ENCODE measurements at regions of chr3 and their contacts with region 1.

Region 1: DNA sequence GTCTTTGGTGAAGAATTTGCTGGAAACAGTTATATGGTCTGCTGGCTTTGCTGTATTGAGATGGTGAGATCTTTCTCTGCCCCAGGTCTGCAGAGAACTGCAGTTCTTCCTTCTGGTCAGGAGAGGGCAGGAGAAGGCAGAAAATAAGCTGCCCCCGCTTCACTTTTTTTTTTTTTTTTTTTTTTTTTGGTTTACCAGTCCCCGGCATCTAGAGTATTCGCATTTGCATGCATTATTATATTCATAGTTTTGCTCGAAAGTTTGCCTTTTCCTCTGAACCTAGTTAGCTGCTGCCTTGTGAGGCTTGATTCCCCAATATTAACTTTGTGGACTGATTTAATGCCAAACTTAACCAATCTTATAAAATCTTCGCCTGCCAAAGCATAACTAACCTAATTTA is 10.6 kb upstream of the PARL start:
- DNase-seq: no peak
- ATAC-seq: peak; percentile 85
- H3K4me3 ChIP-seq: no peak overlapping the region
- H3K27ac ChIP-seq: no peak overlapping the region
- H3K4me1 ChIP-seq: peaks cover 8% of the 10 kb centered on the region; the same call in 1 of the 2 replicates
- H3K27me3 ChIP-seq: no peaks in the 10 kb centered on the region
- CTCF ChIP-seq: peak; percentile 79 to 91 (median 89)
- EP300 ChIP-seq: no peak
- POLR2A ChIP-seq: no peak
- RAD21 ChIP-seq: peak; percentile 98

Region 2: GRCh38 chr3:183857863-183858262 is 37.4 kb before region 1 on chr3:
- CTCF ChIA-PET with region 1: no interaction called
- POLR2A ChIA-PET with region 1: no interaction called
- RAD21 ChIA-PET with region 1: no interaction called
- SMC1A ChIA-PET with region 1: no interaction called
- in situ Hi-C with region 1: no loop called
- intact Hi-C with region 1: no loop called
- DNase-seq: no peak
- ATAC-seq: no peak
- H3K4me3 ChIP-seq: no peak overlapping the region
- H3K27ac ChIP-seq: no peak overlapping the region
- H3K4me1 ChIP-seq: no peaks in the 10 kb centered on the region
- H3K27me3 ChIP-seq: no peaks in the 10 kb centered on the region
- CTCF ChIP-seq: no peak
- EP300 ChIP-seq: no peak
- POLR2A ChIP-seq: no peak
- RAD21 ChIP-seq: no peak

Region 3: GRCh38 chr3:183884427-183885296 is 10.6 kb before region 1 on chr3 and contains the start of gene PARL:
- CTCF ChIA-PET with region 1: interaction called, 26 read pairs
- POLR2A ChIA-PET with region 1: interaction called, 3 read pairs
- RAD21 ChIA-PET with region 1: interaction called, 6 read pairs
- SMC1A ChIA-PET with region 1: interaction called, 6 read pairs
- in situ Hi-C with region 1: no loop called
- intact Hi-C with region 1: no loop called
- DNase-seq: peak; percentile 70
- ATAC-seq: peak; percentile 99
- H3K4me3 ChIP-seq: peak within 1 kb of the TSS; percentile 94
- H3K27ac ChIP-seq: peak within 1 kb of the TSS; percentile 76
- H3K4me1 ChIP-seq: peaks cover 4% of the 10 kb centered on the region
- H3K27me3 ChIP-seq: no peaks in the 10 kb centered on the region
- CTCF ChIP-seq: peak; percentile 98; a peak in 5 of 6 replicates
- EP300 ChIP-seq: no peak
- POLR2A ChIP-seq: peak; percentile 98
- RAD21 ChIP-seq: peak; percentile 67
- polyA plus RNA-seq, gene PARL: 49.7 to 83.0 TPM

Region 4: DNA sequence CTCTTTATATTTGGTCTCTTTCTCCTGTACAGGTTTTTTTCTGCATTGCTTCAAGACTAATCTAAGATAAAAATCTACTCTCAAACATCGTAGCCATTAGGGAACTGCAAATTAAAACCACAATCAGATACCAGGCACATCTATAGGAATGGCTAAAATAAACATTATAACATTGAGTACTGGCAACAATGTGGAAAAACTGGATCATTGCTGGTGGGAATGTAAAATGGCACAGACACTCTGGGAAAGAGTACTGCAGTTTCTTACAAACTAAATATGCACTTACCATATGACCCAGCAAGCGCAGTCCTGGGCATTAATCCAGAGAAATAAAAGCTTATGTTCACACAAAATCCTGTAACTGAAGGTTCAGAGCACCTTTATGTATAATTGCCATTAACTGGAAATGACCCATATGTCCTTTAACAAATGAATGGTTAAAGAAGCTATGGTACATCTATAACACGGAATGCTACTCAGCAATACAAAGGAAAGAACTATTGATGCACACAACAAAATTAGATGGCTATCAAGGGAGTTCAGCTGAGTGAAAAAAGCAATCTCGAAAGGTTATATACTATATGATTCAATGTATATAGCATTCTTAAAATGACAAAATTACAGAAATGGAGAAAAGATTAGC is 116.1 kb after region 1 on chr3:
- CTCF ChIA-PET with region 1: interaction called, 84 read pairs
- POLR2A ChIA-PET with region 1: interaction called, 3 read pairs
- RAD21 ChIA-PET with region 1: interaction called, 9 read pairs
- SMC1A ChIA-PET with region 1: interaction called, 32 read pairs
- in situ Hi-C with region 1: loop called (anchors 5 kb)
- intact Hi-C with region 1: no loop called
- DNase-seq: no peak
- ATAC-seq: no peak
- H3K4me3 ChIP-seq: no peak overlapping the region
- H3K27ac ChIP-seq: no peak overlapping the region
- H3K4me1 ChIP-seq: peaks cover 6% of the 10 kb centered on the region
- H3K27me3 ChIP-seq: no peaks in the 10 kb centered on the region
- CTCF ChIP-seq: no peak
- EP300 ChIP-seq: no peak
- POLR2A ChIP-seq: no peak
- RAD21 ChIP-seq: no peak

Region 5: DNA sequence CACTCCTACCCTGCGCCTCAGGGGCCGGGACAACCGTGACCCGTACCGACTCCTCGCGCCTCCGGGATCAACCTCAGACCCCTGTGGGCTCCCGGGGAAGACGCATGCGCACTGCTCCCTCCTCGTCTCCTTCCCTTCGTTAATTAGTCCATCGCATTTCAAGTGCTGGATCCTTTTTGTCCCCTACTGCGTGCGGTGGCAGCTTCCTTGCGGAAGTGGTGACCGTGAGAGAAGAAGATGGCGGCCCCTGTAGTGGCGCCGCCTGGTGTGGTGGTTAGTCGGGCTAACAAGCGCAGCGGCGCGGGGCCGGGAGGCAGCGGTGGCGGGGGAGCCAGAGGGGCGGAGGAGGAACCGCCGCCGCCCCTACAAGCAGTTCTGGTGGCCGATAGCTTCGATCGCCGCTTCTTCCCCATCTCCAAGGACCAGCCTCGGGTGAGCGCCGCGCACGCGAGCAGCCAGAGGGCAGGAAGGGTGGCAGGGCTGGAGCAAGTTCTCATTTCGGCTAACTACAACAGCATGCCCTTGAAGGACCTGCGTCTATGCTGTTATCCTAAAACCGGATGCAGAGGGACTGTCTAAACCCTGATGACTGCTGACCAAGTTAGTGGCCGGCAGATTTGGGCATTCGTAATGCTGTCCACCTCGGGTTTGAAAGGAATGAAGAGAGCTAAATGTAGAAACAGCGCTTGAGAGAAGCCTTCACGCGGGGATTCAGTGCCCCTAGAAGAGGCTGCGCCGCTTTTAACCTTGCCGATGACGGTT is 240.0 kb after region 1 on chr3 and contains the start of gene EIF2B5:
- CTCF ChIA-PET with region 1: interaction called, 3 read pairs
- POLR2A ChIA-PET with region 1: no interaction called
- RAD21 ChIA-PET with region 1: no interaction called
- SMC1A ChIA-PET with region 1: no interaction called
- in situ Hi-C with region 1: no loop called
- intact Hi-C with region 1: loop called (anchors 10 kb)
- DNase-seq: peak; percentile 84
- ATAC-seq: peak; percentile 92
- H3K4me3 ChIP-seq: peak within 1 kb of the TSS; percentile 95
- H3K27ac ChIP-seq: peak within 1 kb of the TSS; percentile 84
- H3K4me1 ChIP-seq: peaks cover 4% of the 10 kb centered on the region; the same call in 1 of the 2 replicates
- H3K27me3 ChIP-seq: no peaks in the 10 kb centered on the region
- CTCF ChIP-seq: peak; percentile 25 to 36 (median 35); a peak in 4 of 6 replicates
- EP300 ChIP-seq: no peak
- POLR2A ChIP-seq: peak; percentile 96
- RAD21 ChIP-seq: no peak
- polyA plus RNA-seq, gene EIF2B5: 13.7 to 23.6 TPM

Region 6: GRCh38 chr3:184250167-184250828 is 355.0 kb after region 1 on chr3:
- CTCF ChIA-PET with region 1: interaction called, 18 read pairs
- POLR2A ChIA-PET with region 1: no interaction called
- RAD21 ChIA-PET with region 1: interaction called, 8 read pairs
- SMC1A ChIA-PET with region 1: interaction called, 6 read pairs
- in situ Hi-C with region 1: no loop called
- intact Hi-C with region 1: loop called (anchors 1 kb)
- DNase-seq: peak; percentile 85
- ATAC-seq: peak; percentile 88
- H3K4me3 ChIP-seq: peak overlapping the region; percentile 82
- H3K27ac ChIP-seq: peak overlapping the region; percentile 91
- H3K4me1 ChIP-seq: no peaks in the 10 kb centered on the region
- H3K27me3 ChIP-seq: no peaks in the 10 kb centered on the region
- CTCF ChIP-seq: peak; percentile 96 to 97 (median 96)
- EP300 ChIP-seq: no peak
- POLR2A ChIP-seq: no peak
- RAD21 ChIP-seq: peak; percentile 79

Region 7: DNA sequence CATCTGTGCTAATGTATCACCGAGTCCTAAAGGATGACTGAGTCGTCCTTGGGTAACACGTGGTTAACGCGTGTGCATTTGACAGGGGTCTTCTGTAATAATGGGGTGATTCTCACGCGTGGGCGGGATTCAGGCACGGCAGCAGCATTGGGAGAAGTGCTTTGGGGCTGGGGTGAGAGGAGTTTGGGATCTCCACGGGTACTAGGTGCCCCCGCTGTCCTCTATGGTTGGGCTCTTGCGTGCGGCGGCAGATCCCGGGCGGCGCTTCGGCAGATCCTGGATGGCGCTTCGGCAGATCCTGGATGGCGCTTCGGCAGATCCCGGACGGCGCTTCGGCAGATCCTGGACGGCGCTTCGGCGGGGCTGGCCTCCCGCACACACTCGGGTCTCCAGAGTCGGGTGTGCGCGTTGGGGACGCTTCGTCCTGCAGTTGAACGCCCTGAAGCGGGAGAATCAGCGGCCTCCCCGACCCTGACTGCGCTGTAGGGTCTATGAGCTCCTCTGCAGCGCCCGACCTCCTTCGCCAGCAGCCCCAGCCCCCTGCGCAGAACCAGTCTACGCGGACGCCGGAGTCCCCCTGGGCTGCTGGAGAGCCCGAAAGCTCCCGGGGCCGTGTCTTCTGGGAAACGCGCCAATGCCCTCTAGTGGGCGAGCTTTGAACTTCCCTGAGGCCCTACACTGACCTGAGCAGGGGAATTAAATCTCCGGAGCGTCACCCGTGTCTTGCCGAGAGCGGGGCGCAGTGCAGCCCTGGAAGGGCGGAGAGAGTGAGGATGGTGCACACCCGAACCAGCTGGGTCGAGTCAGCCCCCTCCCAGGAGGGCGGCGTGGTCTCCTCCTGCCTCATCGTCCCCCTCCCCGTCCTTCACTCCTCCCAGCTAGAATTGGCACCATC is 618.2 kb after region 1 on chr3:
- CTCF ChIA-PET with region 1: interaction called, 4 read pairs
- POLR2A ChIA-PET with region 1: no interaction called
- RAD21 ChIA-PET with region 1: no interaction called
- SMC1A ChIA-PET with region 1: no interaction called
- in situ Hi-C with region 1: loop called (anchors 10 kb)
- intact Hi-C with region 1: no loop called
- DNase-seq: peak; percentile 7
- ATAC-seq: peak; percentile 100
- H3K4me3 ChIP-seq: no peak overlapping the region
- H3K27ac ChIP-seq: no peak overlapping the region
- H3K4me1 ChIP-seq: no peaks in the 10 kb centered on the region
- H3K27me3 ChIP-seq: peaks cover 2 to 12% of the 10 kb centered on the region in 2 experiments
- CTCF ChIP-seq: peak; percentile 86 to 90 (median 90)
- EP300 ChIP-seq: no peak
- POLR2A ChIP-seq: no peak
- RAD21 ChIP-seq: peak; percentile 78

Measured in GM12878 (cell line).